ENCODE measurements at regions of chr11 and their contacts with region 1.

Region 1: DNA sequence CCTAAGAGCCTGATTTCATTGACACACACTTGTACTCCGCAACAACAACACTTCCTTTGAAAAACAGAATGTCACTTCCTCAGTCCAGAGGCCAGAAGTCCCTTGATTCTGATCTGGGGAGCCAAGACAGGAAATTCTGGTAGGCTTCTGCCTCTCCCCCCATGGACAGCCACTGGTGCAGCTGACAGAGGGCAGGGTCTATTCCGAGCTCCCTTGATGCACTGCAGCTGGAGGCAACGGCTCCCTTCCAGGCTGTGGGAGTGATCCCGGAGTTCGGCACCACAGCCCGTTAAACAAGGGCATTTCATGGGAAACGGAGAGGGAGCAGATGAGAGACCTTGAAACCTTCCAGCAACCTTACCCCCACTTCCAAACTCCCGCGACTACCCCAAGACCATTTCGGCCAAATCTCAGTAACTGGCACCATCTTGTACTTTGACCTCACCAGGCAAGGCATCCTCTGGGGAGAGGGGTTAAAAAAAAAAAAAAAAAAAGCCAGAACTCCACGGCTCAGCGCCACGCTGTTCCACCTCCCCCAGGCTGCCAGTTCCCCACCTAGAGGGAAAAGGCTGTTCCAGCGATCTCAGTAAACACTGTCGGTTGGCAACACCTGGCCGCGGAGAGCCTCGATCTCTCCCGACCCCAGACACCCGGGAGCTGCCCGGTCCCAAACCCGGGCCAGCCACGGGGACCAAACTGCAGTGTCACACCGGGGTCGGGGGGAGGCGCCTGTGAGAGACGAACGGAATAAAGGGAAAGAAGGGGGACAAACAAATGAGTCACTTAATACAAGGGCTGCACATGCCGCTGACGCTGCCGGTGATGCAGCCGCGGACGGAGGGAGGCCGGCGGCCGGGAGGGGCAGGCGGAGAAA is 1.1 kb downstream of the GAB2 start:
- DNase-seq: peak; percentile 82
- H3K4me3 Mint-ChIP-seq: peak overlapping the region; percentile 95
- H3K27ac Mint-ChIP-seq: peak overlapping the region; percentile 96
- H3K4me1 Mint-ChIP-seq: peaks cover 62% of the 10 kb centered on the region
- H3K27me3 Mint-ChIP-seq: no peaks in the 10 kb centered on the region

Region 2: DNA sequence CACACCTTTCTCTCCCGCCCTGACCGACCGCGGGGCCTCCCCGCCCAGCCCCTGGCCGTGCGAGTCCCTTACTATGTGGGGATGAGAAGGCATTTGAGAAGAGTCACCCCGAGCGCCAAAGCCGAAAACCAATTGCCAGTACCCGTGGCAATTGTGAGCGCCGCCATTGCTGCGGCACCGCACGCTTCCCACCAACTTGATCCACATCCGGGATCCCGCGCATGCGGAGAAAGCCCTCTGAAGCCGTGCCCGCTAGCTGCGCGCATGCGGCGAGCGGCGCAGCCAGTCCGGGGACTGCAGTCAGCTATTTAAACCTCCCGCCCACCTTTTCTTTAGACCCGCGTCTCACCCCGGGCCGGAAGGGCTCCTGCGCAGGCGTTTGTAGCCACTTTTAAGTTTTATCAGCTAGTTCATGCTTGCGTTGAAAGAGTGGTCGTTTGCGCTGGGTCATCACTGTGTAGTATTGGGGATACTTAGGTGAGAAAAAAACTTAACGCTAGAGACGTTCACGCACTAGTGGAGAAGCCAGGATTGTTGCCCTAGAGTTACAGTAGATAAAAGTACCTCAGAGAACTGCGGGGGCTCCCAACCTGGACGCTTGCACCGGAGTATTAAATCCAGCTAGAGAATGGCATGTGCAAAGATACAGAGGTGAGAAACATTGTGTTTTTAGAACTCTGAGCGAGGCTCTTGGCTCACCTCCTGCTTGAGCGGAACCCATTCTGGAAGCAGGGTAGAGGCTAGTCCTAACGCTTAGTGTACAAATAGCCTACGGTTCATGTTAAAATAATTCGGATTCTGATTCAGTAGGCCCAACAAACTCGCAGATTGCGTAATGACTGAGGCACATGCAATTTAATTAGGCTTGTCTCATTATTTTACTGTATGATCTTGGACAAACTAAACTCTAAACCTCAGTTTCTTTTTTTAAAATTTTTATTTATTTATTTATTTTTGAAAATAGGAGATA is 276.8 kb before region 1 on chr11 and contains the start of gene ALG8:
- intact Hi-C with region 1: loop called (anchors 5 kb)
- DNase-seq: peak; percentile 97
- H3K4me3 Mint-ChIP-seq: peak within 1 kb of the TSS; percentile 89
- H3K27ac Mint-ChIP-seq: peak within 1 kb of the TSS; percentile 83
- H3K4me1 Mint-ChIP-seq: peaks cover 44% of the 10 kb centered on the region
- H3K27me3 Mint-ChIP-seq: no peaks in the 10 kb centered on the region
- total RNA-seq, gene ALG8: 58.6 and 70.1 TPM in 2 replicates

Region 3: GRCh38 chr11:78228467-78228866 is 188.1 kb before region 1 on chr11:
- intact Hi-C with region 1: loop called (anchors 2 kb)
- DNase-seq: peak; percentile 30
- H3K4me3 Mint-ChIP-seq: no peak overlapping the region
- H3K27ac Mint-ChIP-seq: no peak overlapping the region
- H3K4me1 Mint-ChIP-seq: peaks cover 73% of the 10 kb centered on the region
- H3K27me3 Mint-ChIP-seq: no peaks in the 10 kb centered on the region

Region 4: GRCh38 chr11:78397387-78397786 is 19.2 kb before region 1 on chr11:
- intact Hi-C with region 1: loop called (anchors 2 kb)
- DNase-seq: no peak
- H3K4me3 Mint-ChIP-seq: no peak overlapping the region
- H3K27ac Mint-ChIP-seq: peak overlapping the region; percentile 51
- H3K4me1 Mint-ChIP-seq: peaks cover 69% of the 10 kb centered on the region
- H3K27me3 Mint-ChIP-seq: no peaks in the 10 kb centered on the region

Region 5: GRCh38 chr11:78465169-78465942 is 48.8 kb after region 1 on chr11:
- intact Hi-C with region 1: loop called (anchors 2 kb)
- DNase-seq: peak; percentile 63
- H3K4me3 Mint-ChIP-seq: peak overlapping the region; percentile 52
- H3K27ac Mint-ChIP-seq: peak overlapping the region; percentile 70
- H3K4me1 Mint-ChIP-seq: peaks cover 41% of the 10 kb centered on the region
- H3K27me3 Mint-ChIP-seq: no peaks in the 10 kb centered on the region

Region 6: GRCh38 chr11:78645226-78646202 is 229.0 kb after region 1 on chr11:
- intact Hi-C with region 1: loop called (anchors 2 kb)
- DNase-seq: peak; percentile 52
- H3K4me3 Mint-ChIP-seq: no peak overlapping the region
- H3K27ac Mint-ChIP-seq: no peak overlapping the region
- H3K4me1 Mint-ChIP-seq: peaks cover 52% of the 10 kb centered on the region
- H3K27me3 Mint-ChIP-seq: no peaks in the 10 kb centered on the region

Measured in activated T-helper 2 cell treated with anti-CD3 and anti-CD28 coated beads, Interferon-gamma antibody, Interleukin-2, Interleukin-4, amounts not matched to agents 10 μg/mL and 5 μg/mL and 100 μg/mL, durations not matched to agents 14 hours and 24 hours and 36 hours (primary cell).